ENCODE measurements at regions of chr12 and their contacts with region 1.

Region 1: GRCh38 chr12:9741726-9742125 is 8.8 kb upstream of the CLECL1 start:
- DNase-seq: peak; percentile 85 to 94 (median 91)
- H3K4me3 ChIP-seq: peak overlapping the region in 1 of 2 donors; percentile 38
- H3K4me3 Mint-ChIP-seq: peak overlapping the region; percentile 66 to 92 (median 84)
- H3K27ac ChIP-seq: peak overlapping the region; percentile 62
- H3K27ac Mint-ChIP-seq: peak overlapping the region; percentile 81 to 100 (median 99)
- H3K4me1 ChIP-seq: peaks cover 68% of the 10 kb centered on the region
- H3K4me1 Mint-ChIP-seq: peaks cover 50 to 69% (median 59%) of the 10 kb centered on the region in 4 donors
- H3K27me3 ChIP-seq: no peaks in the 10 kb centered on the region
- H3K27me3 Mint-ChIP-seq: no peaks in the 10 kb centered on the region

Region 2: DNA sequence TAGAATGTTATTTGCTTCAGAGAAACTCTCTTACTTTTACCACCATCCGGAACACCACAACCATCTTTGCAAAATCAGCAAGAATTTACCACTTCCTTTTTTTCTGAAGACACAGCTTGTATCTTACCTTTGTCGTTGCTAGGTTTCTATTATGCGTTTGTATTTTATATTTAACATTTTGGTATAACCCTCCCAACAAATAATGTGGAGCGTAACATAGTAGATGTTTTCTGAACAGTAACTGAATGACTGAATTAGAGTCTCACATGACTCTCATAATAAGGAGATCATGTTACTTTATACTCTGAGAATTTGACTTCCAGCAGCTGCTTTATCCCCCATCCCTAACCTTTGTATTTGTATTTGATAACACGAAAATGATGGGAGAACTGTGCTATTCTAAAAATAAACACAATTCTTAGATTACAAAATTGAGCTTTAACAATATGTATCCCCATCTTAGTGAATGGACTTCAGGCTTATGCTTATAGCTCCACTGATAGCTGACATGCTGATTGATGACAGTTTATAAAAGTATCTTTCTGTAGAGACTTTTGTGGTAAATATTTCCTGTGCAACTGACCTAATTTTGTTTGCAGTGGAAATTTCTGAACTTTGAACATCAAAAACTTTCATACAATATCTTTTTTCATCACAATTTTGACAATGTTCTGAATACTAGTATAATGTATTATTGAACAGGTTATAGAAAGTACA is 126.1 kb before region 1 on chr12:
- CTCF ChIA-PET with region 1: interaction called, 8 read pairs
- POLR2A ChIA-PET with region 1: interaction called, 19 read pairs
- intact Hi-C with region 1: no loop called
- DNase-seq: peak; percentile 39 to 85 (median 76)
- H3K4me3 ChIP-seq: peak overlapping the region in 1 of 2 donors; percentile 46
- H3K4me3 Mint-ChIP-seq: peak overlapping the region; percentile 80 to 94 (median 88)
- H3K27ac ChIP-seq: peak overlapping the region; percentile 84
- H3K27ac Mint-ChIP-seq: peak overlapping the region; percentile 95 to 100 (median 98)
- H3K4me1 ChIP-seq: peaks cover 63% of the 10 kb centered on the region
- H3K4me1 Mint-ChIP-seq: peaks cover 61 to 97% (median 75%) of the 10 kb centered on the region in 4 donors
- H3K27me3 ChIP-seq: no peaks in the 10 kb centered on the region
- H3K27me3 Mint-ChIP-seq: no peaks in the 10 kb centered on the region

Region 3: GRCh38 chr12:9667403-9668160 is 74.1 kb before region 1 on chr12:
- CTCF ChIA-PET with region 1: interaction called, 13 read pairs
- POLR2A ChIA-PET with region 1: interaction called, 39 read pairs
- intact Hi-C with region 1: loop called (anchors 2 kb)
- DNase-seq: no peak
- H3K4me3 ChIP-seq: peak overlapping the region in 1 of 2 donors; percentile 11
- H3K4me3 Mint-ChIP-seq: peak overlapping the region; percentile 86 to 95 (median 92)
- H3K27ac ChIP-seq: peak overlapping the region; percentile 79
- H3K27ac Mint-ChIP-seq: peak overlapping the region; percentile 85 to 97 (median 95)
- H3K4me1 ChIP-seq: peaks cover 70% of the 10 kb centered on the region
- H3K4me1 Mint-ChIP-seq: peaks cover 50 to 82% (median 58%) of the 10 kb centered on the region in 4 donors
- H3K27me3 ChIP-seq: no peaks in the 10 kb centered on the region
- H3K27me3 Mint-ChIP-seq: no peaks in the 10 kb centered on the region

Region 4: GRCh38 chr12:9707864-9708808 is 33.6 kb before region 1 on chr12:
- CTCF ChIA-PET with region 1: interaction called, 22 read pairs
- POLR2A ChIA-PET with region 1: interaction called, 39 read pairs
- intact Hi-C with region 1: loop called (anchors 1 kb)
- DNase-seq: peak; percentile 72 to 75 (median 74)
- H3K4me3 ChIP-seq: peak overlapping the region; percentile 4 to 29
- H3K4me3 Mint-ChIP-seq: peak overlapping the region; percentile 60 to 82 (median 77)
- H3K27ac ChIP-seq: peak overlapping the region; percentile 66
- H3K27ac Mint-ChIP-seq: peak overlapping the region; percentile 87 to 97 (median 96)
- H3K4me1 ChIP-seq: peaks cover 44% of the 10 kb centered on the region
- H3K4me1 Mint-ChIP-seq: peaks cover 47 to 59% (median 49%) of the 10 kb centered on the region in 4 donors
- H3K27me3 ChIP-seq: no peaks in the 10 kb centered on the region
- H3K27me3 Mint-ChIP-seq: no peaks in the 10 kb centered on the region

Region 5: DNA sequence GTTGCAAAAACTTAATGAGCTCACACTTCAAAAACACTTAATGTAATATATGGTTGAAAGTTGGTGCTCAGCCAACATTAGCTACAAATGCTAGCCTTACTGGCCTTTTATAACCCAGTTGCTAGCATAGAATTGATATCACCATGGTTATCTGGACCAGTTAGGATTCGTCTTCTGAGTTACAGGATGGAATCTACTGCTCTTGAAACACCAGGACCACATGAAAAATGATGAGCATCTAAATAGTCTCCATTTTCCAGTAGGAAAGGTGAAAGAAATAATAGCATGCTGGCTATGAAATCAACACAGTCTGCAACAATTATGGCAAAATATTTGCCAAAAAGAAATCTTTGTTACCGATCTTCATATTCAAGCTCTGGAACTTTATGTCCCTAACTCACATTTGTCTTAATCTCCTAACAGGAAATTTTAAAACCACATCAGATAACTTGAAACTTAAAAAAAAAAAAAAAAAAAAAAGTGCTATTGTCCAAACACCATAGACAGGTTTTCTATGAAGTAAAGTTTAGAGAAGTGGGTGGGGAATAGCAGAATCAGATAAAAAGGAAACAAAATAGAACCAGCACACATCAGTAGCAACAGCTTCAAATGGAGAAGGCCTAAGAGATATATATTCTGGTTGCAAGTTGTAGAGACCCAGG is 31.6 kb after region 1 on chr12:
- CTCF ChIA-PET with region 1: interaction called, 12 read pairs
- POLR2A ChIA-PET with region 1: no interaction called
- intact Hi-C with region 1: no loop called
- DNase-seq: peak in 3 of 5 donors; percentile 45 to 59 (median 50)
- H3K4me3 ChIP-seq: no peak overlapping the region
- H3K4me3 Mint-ChIP-seq: peak overlapping the region; percentile 26 to 79 (median 68)
- H3K27ac ChIP-seq: peak overlapping the region; percentile 24
- H3K27ac Mint-ChIP-seq: peak overlapping the region; percentile 15 to 88 (median 77)
- H3K4me1 ChIP-seq: peaks cover 82% of the 10 kb centered on the region
- H3K4me1 Mint-ChIP-seq: peaks cover 68 to 93% (median 82%) of the 10 kb centered on the region in 4 donors
- H3K27me3 ChIP-seq: no peaks in the 10 kb centered on the region
- H3K27me3 Mint-ChIP-seq: no peaks in the 10 kb centered on the region

Region 6: DNA sequence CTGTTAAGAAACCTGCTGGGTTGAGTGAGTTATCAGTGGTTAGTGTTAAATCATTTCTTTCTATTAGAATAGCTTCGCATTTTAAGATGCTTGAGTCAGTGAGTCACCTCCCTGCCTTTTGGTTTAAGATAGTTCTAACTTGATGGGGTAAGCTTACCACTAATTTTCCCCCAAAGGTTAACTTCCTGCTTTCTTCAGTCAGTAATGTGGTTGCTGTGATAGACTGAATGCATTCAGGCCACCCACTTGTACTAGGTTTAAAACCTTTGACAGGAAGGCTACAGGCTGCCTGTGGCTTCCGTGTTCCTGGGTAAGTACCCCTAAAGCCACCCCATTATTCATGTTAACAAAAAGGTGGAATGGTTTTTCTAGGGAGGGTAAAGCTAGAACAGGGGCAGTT is 165.1 kb after region 1 on chr12:
- CTCF ChIA-PET with region 1: interaction called, 3 read pairs
- POLR2A ChIA-PET with region 1: interaction called, 11 read pairs
- intact Hi-C with region 1: no loop called
- DNase-seq: peak; percentile 42 to 63 (median 54)
- H3K4me3 ChIP-seq: no peak overlapping the region
- H3K4me3 Mint-ChIP-seq: peak overlapping the region in 7 of 8 donors; percentile 18 to 63 (median 47)
- H3K27ac ChIP-seq: no peak overlapping the region
- H3K27ac Mint-ChIP-seq: peak overlapping the region; percentile 18 to 86 (median 76)
- H3K4me1 ChIP-seq: peaks cover 22% of the 10 kb centered on the region
- H3K4me1 Mint-ChIP-seq: peaks cover 18 to 29% (median 25%) of the 10 kb centered on the region in 4 donors
- H3K27me3 ChIP-seq: no peaks in the 10 kb centered on the region
- H3K27me3 Mint-ChIP-seq: no peaks in the 10 kb centered on the region

Region 7: GRCh38 chr12:9961106-9961505 is 219.4 kb after region 1 on chr12:
- CTCF ChIA-PET with region 1: no interaction called
- POLR2A ChIA-PET with region 1: no interaction called
- intact Hi-C with region 1: no loop called
- DNase-seq: no peak
- H3K4me3 ChIP-seq: no peak overlapping the region
- H3K4me3 Mint-ChIP-seq: no peak overlapping the region
- H3K27ac ChIP-seq: no peak overlapping the region
- H3K27ac Mint-ChIP-seq: no peak overlapping the region
- H3K4me1 ChIP-seq: peaks cover 15% of the 10 kb centered on the region
- H3K4me1 Mint-ChIP-seq: peaks cover 15 to 30% (median 25%) of the 10 kb centered on the region in 4 donors
- H3K27me3 ChIP-seq: no peaks in the 10 kb centered on the region
- H3K27me3 Mint-ChIP-seq: no peaks in the 10 kb centered on the region

Region 8: GRCh38 chr12:10042167-10042566 is 300.4 kb after region 1 on chr12:
- CTCF ChIA-PET with region 1: no interaction called
- POLR2A ChIA-PET with region 1: no interaction called
- intact Hi-C with region 1: no loop called
- DNase-seq: no peak
- H3K4me3 ChIP-seq: no peak overlapping the region
- H3K4me3 Mint-ChIP-seq: no peak overlapping the region
- H3K27ac ChIP-seq: no peak overlapping the region
- H3K27ac Mint-ChIP-seq: no peak overlapping the region
- H3K4me1 ChIP-seq: no peaks in the 10 kb centered on the region
- H3K4me1 Mint-ChIP-seq: no peaks in the 10 kb centered on the region
- H3K27me3 ChIP-seq: no peaks in the 10 kb centered on the region
- H3K27me3 Mint-ChIP-seq: peaks cover 10 to 24% of the 10 kb centered on the region in 2 donors

Measured in CD4-positive, alpha-beta memory T cell (primary cell).